ENCODE measurements at regions of chr5 and their contacts with region 1.

Region 1: DNA sequence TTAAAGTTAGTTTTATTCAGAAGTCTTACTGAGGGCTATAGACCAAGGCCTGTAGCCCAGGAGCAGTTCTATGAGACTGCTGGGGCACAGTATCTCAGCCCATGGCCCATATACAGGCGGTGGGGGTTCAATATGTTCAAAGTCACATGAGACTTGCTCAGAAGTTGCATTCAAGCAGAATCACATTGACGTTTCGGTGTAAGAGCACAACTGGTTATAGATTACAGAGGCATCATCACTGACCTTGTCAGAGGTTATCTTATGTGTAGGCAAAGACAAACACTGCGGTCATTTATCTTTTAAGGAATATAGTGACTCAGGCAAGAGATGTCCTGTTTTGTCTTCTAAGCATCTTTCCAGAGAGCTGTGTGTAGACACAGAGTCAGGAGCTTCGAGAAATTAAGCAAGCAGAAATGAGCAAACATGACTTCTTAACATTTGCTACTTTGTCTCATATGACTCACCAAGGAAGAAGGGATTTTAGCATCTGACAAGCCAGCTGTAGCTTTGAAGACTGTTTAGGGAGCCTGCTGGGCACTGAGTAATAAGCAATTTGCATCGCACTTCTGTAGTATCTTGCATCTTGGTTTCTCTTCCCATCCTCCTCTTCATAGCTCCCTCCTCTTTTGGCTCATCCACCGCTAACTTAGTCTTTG is 12.9 kb upstream of the F2RL1 start:
- DNase-seq: peak; percentile 96
- H3K4me3 ChIP-seq: peak overlapping the region; percentile 12; the same call in 1 of the 2 replicates
- H3K27ac ChIP-seq: peak overlapping the region; percentile 89
- H3K27me3 ChIP-seq: no peaks in the 10 kb centered on the region
- CTCF ChIP-seq: no peak

Region 2: GRCh38 chr5:76696251-76696650 is 109.7 kb before region 1 on chr5:
- CTCF ChIA-PET with region 1: no interaction called
- POLR2A ChIA-PET with region 1: no interaction called
- DNase-seq: no peak
- H3K4me3 ChIP-seq: no peak overlapping the region
- H3K27ac ChIP-seq: no peak overlapping the region
- H3K27me3 ChIP-seq: no peaks in the 10 kb centered on the region
- CTCF ChIP-seq: no peak

Region 3: DNA sequence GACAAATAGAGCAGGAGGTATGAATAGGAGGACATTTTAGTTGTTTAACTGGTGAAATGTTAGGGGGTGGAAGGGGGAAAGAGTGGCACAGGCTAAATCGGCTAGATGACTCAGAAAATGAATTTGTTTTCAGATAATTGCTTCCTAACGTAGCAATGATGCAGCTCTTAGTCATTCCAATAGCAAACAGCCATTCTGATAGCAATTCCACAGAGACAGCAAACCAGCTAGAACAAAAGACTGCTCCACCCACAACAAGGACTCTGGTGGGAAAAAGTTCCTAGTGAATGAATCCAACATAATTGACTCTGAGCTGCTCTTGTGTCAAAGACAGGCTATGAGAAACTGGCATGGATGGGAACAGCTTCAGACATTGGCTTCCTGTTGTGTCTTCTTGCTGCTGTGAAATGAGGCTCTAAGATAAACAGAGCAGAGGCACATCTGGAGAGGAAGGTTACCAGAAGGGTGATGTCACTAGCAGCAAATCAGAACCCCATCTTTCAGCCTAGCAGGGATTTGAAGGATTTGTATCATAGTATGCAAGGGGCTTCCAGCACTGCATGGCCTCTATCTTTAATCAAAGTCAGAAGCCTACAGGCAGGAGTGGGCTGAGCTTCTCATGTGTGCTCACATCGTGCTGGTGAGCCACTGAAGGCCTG is 15.2 kb before region 1 on chr5:
- CTCF ChIA-PET with region 1: interaction called, 3 read pairs
- POLR2A ChIA-PET with region 1: interaction called, 33 read pairs
- DNase-seq: peak; percentile 94
- H3K4me3 ChIP-seq: no peak overlapping the region
- H3K27ac ChIP-seq: peak overlapping the region; percentile 96
- H3K27me3 ChIP-seq: no peaks in the 10 kb centered on the region
- CTCF ChIP-seq: no peak